WTC11 (cell line): ENCODE measurements at regions of chr13 and their contacts with region 1.

Region 1: GRCh38 chr13:52968074-52968700 is 60.4 kb upstream of the OLFM4 start:
- DNase-seq: peak; percentile 92
- ATAC-seq: peak; percentile 100
- H3K4me3 Mint-ChIP-seq: no peak overlapping the region
- H3K27ac Mint-ChIP-seq: no peak overlapping the region
- H3K4me1 Mint-ChIP-seq: no peaks in the 10 kb centered on the region; the same call in 1 of the 2 replicates
- H3K27me3 Mint-ChIP-seq: peaks cover 4% of the 10 kb centered on the region; the same call in 1 of the 2 replicates
- CTCF ChIP-seq: peak; percentile 84

Region 2: GRCh38 chr13:52713894-52714293 is 254.3 kb before region 1 on chr13:
- CTCF ChIA-PET with region 1: no interaction called
- POLR2A ChIA-PET with region 1: no interaction called
- DNase-seq: no peak
- ATAC-seq: no peak
- H3K4me3 Mint-ChIP-seq: no peak overlapping the region
- H3K27ac Mint-ChIP-seq: no peak overlapping the region
- H3K4me1 Mint-ChIP-seq: peaks cover 31% of the 10 kb centered on the region
- H3K27me3 Mint-ChIP-seq: no peaks in the 10 kb centered on the region; the same call in 1 of the 2 replicates
- CTCF ChIP-seq: no peak

Region 3: DNA sequence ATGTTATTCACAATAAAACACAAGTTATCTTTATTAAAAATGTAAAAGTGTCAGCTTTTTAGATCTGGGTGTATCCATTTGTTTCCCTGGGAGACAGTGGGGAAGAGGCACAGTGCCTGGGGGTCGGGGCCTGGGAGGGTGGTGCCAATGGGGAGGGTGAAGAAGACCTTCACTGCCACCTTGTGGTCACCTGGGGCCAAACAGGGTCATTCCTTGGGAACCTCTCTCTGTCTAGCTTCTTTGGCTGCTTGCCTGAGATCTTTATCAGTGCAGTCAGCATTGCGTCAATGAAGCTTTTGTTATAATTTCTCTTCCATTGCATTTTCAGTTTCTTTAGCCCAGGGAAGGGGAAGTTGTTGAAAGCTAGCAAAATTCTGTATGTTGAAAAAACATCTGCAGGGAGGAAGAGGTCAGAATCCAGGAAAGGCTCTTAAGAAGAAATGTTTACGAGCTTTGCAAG is 158.8 kb before region 1 on chr13:
- CTCF ChIA-PET with region 1: interaction called, 27 read pairs
- POLR2A ChIA-PET with region 1: no interaction called
- DNase-seq: peak; percentile 83
- ATAC-seq: peak; percentile 96
- H3K4me3 Mint-ChIP-seq: no peak overlapping the region
- H3K27ac Mint-ChIP-seq: no peak overlapping the region
- H3K4me1 Mint-ChIP-seq: peaks cover 16% of the 10 kb centered on the region
- H3K27me3 Mint-ChIP-seq: no peaks in the 10 kb centered on the region
- CTCF ChIP-seq: peak; percentile 80

Region 4: GRCh38 chr13:52879950-52880741 is 88.0 kb before region 1 on chr13:
- CTCF ChIA-PET with region 1: interaction called, 39 read pairs
- POLR2A ChIA-PET with region 1: no interaction called
- DNase-seq: peak; percentile 26
- ATAC-seq: peak; percentile 85
- H3K4me3 Mint-ChIP-seq: peak overlapping the region; percentile 47
- H3K27ac Mint-ChIP-seq: peak overlapping the region; percentile 19; the same call in 1 of the 2 replicates
- H3K4me1 Mint-ChIP-seq: peaks cover 62% of the 10 kb centered on the region
- H3K27me3 Mint-ChIP-seq: peaks cover 98% of the 10 kb centered on the region
- CTCF ChIP-seq: no peak

Region 5: GRCh38 chr13:52925775-52926285 is 42.4 kb before region 1 on chr13:
- CTCF ChIA-PET with region 1: interaction called, 16 read pairs
- POLR2A ChIA-PET with region 1: no interaction called
- DNase-seq: no peak
- ATAC-seq: no peak
- H3K4me3 Mint-ChIP-seq: no peak overlapping the region
- H3K27ac Mint-ChIP-seq: no peak overlapping the region
- H3K4me1 Mint-ChIP-seq: peaks cover 18% of the 10 kb centered on the region
- H3K27me3 Mint-ChIP-seq: peaks cover 5% of the 10 kb centered on the region
- CTCF ChIP-seq: no peak

Region 6: GRCh38 chr13:52980695-52981094 is 12.5 kb after region 1 on chr13:
- CTCF ChIA-PET with region 1: interaction called, 45 read pairs
- POLR2A ChIA-PET with region 1: no interaction called
- DNase-seq: no peak
- ATAC-seq: no peak
- H3K4me3 Mint-ChIP-seq: no peak overlapping the region
- H3K27ac Mint-ChIP-seq: no peak overlapping the region
- H3K4me1 Mint-ChIP-seq: peaks cover 13% of the 10 kb centered on the region
- H3K27me3 Mint-ChIP-seq: no peaks in the 10 kb centered on the region; the same call in 1 of the 2 replicates
- CTCF ChIP-seq: no peak

Region 7: GRCh38 chr13:53075356-53076041 is 107.3 kb after region 1 on chr13:
- CTCF ChIA-PET with region 1: interaction called, 11 read pairs
- POLR2A ChIA-PET with region 1: no interaction called
- DNase-seq: no peak
- ATAC-seq: peak; percentile 62
- H3K4me3 Mint-ChIP-seq: no peak overlapping the region
- H3K27ac Mint-ChIP-seq: no peak overlapping the region
- H3K4me1 Mint-ChIP-seq: peaks cover 8% of the 10 kb centered on the region
- H3K27me3 Mint-ChIP-seq: peaks cover 4% of the 10 kb centered on the region; the same call in 1 of the 2 replicates
- CTCF ChIP-seq: no peak

Region 8: GRCh38 chr13:53200498-53201453 is 232.6 kb after region 1 on chr13:
- CTCF ChIA-PET with region 1: interaction called, 67 read pairs
- POLR2A ChIA-PET with region 1: interaction called, 3 read pairs
- DNase-seq: peak; percentile 90
- ATAC-seq: peak; percentile 78
- H3K4me3 Mint-ChIP-seq: peak overlapping the region; percentile 55
- H3K27ac Mint-ChIP-seq: no peak overlapping the region
- H3K4me1 Mint-ChIP-seq: no peaks in the 10 kb centered on the region
- H3K27me3 Mint-ChIP-seq: peaks cover 62% of the 10 kb centered on the region
- CTCF ChIP-seq: peak; percentile 92

Region 9: GRCh38 chr13:53311561-53311960 is 343.4 kb after region 1 on chr13:
- CTCF ChIA-PET with region 1: no interaction called
- POLR2A ChIA-PET with region 1: no interaction called
- DNase-seq: no peak
- ATAC-seq: peak; percentile 60
- H3K4me3 Mint-ChIP-seq: no peak overlapping the region
- H3K27ac Mint-ChIP-seq: no peak overlapping the region
- H3K4me1 Mint-ChIP-seq: peaks cover 23% of the 10 kb centered on the region
- H3K27me3 Mint-ChIP-seq: peaks cover 79% of the 10 kb centered on the region
- CTCF ChIP-seq: no peak

Region 10: DNA sequence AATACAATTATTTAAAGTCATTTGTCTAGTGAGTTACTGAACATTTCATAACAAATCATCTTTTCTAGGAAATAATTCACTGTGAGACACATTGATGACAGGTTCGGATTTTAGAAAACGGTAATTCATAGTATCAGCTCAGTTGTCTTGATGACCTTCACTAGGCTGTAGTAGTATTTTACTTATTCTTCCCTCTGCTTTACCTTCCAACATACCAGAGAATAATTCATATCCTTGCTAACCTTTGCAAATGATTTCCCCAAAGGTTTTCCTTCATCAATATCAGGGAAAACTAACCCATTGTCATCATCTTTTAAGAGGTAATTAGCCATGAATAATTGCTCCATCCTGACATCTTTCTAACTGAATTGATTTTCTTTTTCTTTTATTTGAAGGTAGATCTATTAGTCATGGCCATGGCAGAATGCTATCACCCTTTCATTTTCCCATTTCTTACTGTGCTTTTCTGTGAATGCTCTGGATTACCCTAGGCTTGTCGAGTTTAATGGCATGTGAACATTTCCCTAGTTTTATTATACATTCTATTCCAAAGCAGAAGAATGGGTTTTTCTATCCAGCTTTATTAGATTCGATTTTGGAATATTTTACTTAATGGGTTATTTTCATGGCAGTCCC is 359.6 kb after region 1 on chr13:
- CTCF ChIA-PET with region 1: no interaction called
- POLR2A ChIA-PET with region 1: no interaction called
- DNase-seq: no peak
- ATAC-seq: no peak
- H3K4me3 Mint-ChIP-seq: no peak overlapping the region
- H3K27ac Mint-ChIP-seq: no peak overlapping the region
- H3K4me1 Mint-ChIP-seq: no peaks in the 10 kb centered on the region
- H3K27me3 Mint-ChIP-seq: peaks cover 32% of the 10 kb centered on the region
- CTCF ChIP-seq: no peak